Naive thymus-derived CD8-positive, alpha-beta T cell (primary cell): ENCODE measurements at regions of chr16 and their contacts with region 1.

Region 1: DNA sequence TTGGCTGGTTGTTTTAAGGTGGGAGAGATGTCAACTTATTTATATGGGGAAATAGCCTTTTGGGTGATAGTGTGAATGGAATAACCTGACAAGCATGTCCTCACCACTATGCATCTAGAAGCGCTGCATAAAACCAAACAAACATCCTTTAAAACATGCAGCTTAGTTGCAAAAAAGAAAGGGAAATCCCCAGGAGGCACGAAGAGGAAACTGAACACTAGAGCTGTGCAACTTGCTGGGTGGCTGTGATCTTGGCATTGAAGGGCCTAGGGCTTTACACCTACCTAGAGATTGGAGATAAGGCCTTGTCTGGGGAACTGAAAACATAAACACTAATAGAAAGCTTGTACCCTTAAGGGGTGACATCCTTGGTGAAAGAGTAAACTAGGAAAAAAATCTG is 7.3 kb downstream of the C16orf54 start:
- DNase-seq: peak; percentile 25 to 83 (median 72)
- ATAC-seq: peak; percentile 79 to 86
- H3K4me3 Mint-ChIP-seq: peak overlapping the region; percentile 36 to 80 (median 66)
- H3K27ac Mint-ChIP-seq: peak overlapping the region; percentile 82 to 100 (median 95)
- H3K4me1 Mint-ChIP-seq: peaks cover 58 to 88% (median 85%) of the 10 kb centered on the region in 4 donors
- H3K27me3 Mint-ChIP-seq: no peaks in the 10 kb centered on the region

Region 2: GRCh38 chr16:29686740-29687332 is 51.7 kb before region 1 on chr16:
- POLR2A ChIA-PET with region 1: no interaction called
- DNase-seq: no peak
- ATAC-seq: no peak
- H3K4me3 Mint-ChIP-seq: no peak overlapping the region
- H3K27ac Mint-ChIP-seq: peak overlapping the region in 1 of 10 donors; percentile 60
- H3K4me1 Mint-ChIP-seq: peaks cover 5 to 12% (median 11%) of the 10 kb centered on the region in 4 donors
- H3K27me3 Mint-ChIP-seq: no peaks in the 10 kb centered on the region

Region 3: DNA sequence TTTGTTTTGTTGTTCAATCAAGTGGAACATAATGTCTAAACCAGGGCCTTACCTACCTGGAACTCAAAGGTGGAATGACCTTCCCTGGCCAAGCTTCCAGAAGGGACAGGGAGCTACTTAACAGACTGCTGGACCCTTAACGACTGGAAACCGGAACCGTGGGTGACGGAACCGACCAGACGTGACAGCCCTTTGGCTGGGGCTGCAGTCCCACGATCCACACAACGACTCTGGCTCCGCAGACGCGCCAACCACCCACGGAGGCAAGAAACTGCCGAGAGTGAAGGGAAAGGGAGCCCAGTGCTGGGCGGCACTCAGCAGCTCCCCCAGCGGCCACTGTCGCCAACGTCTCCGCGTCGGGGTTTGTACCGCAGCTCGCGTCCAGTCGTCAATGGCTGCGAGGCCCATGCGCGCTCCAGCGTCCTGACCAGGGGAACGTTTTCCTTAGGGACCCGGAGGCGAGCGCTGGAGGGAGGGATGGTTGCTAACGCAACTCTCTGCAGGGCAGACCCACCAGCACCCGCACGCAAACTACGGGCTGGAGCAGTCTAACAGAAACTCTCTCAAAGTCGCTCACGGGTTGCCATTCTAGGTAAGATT is 46.5 kb after region 1 on chr16:
- POLR2A ChIA-PET with region 1: interaction called, 223 read pairs
- DNase-seq: peak; percentile 50 to 82 (median 64)
- ATAC-seq: peak; percentile 89 to 93
- H3K4me3 Mint-ChIP-seq: peak overlapping the region; percentile 58 to 75 (median 72)
- H3K27ac Mint-ChIP-seq: peak overlapping the region; percentile 54 to 92 (median 82)
- H3K4me1 Mint-ChIP-seq: peaks cover 17 to 40% (median 32%) of the 10 kb centered on the region in 4 donors
- H3K27me3 Mint-ChIP-seq: no peaks in the 10 kb centered on the region